Posterior vena cava (tissue), 2 donors: ENCODE measurements at regions of chr19 and their contacts with region 1.

Region 1: GRCh38 chr19:38290631-38291157 is 13.4 kb upstream of the C19orf33 start:
- DNase-seq: no peak

Region 2: DNA sequence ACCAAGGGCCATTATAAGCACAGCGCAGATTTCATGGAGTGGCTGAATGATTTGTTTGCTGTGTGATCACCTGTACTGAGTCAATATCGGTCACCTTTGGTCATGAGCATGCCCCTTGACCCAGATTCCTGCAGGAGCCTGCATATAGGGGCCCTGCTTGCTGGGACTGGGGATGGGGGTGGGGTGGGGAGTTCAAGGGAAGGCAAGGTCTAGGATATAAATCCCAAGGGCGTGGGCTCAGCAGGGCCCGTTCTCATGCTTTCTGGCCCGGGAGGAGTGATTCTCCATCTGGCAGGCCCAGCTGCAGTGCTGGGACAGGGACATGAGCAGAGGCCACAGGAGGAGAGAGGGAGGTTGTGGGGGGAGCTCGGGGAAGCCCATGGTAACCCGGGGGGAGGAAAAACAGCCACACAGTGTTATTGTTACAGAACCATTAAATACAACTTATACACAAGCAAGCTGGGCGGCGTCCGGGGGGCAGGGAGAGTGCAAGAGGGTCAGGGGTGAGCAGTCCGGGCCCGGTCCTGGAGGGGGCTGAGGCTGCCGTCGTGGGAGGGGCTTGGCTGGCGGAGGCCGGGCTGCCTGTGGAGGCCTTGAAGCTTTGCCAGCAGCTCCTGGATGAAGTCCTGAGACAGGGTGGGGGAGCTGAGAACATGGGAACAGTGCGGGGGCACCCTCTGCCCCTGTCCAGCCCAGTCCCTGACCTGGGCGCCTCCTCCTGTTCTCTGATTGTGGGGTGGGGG is 39.7 kb before region 1 on chr19:
- intact Hi-C with region 1: no loop called
- DNase-seq: peak; percentile 90

Region 3: DNA sequence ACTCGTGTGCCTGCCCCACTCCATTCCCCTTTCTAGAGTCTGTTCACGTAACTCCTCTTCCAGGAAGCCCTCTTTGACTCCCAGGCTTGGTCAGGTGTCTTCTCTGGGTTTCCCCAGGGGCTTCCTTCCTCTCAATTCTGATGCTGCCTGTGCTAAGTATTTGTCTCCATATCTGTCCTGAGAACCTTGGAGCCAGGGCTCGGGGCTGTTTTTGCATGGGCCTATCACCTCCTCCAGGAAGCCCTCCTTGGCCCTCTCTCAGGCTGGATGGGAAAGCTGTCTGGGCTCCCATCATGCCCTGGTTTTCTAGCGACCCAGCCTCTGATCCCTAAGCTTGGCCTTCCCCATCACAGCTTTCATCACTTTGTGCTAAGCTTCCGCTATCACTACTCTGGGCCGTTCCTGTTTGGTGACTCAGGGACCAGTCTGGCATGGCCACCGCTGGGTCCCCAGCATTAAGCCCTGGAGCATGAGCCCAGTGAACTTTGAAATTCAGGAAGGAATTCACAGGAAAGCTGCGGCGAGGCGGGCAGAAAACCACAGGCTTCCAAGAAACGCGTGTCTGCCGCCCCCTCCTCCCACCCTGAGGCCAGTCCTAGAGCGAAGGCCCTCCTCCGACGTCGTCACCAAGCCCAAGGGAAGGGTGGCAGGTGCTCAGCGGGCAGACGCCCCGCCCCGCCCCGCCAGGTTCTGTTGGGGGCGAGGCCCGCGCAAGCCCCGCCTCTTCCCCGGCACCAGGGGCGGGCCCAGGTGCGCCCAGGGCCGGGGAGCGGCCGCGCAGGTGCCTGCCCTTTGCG is 26.8 kb before region 1 on chr19:
- intact Hi-C with region 1: loop called in 1 of 2 experiments (anchors 1 kb)
- DNase-seq: peak; percentile 85

Region 4: DNA sequence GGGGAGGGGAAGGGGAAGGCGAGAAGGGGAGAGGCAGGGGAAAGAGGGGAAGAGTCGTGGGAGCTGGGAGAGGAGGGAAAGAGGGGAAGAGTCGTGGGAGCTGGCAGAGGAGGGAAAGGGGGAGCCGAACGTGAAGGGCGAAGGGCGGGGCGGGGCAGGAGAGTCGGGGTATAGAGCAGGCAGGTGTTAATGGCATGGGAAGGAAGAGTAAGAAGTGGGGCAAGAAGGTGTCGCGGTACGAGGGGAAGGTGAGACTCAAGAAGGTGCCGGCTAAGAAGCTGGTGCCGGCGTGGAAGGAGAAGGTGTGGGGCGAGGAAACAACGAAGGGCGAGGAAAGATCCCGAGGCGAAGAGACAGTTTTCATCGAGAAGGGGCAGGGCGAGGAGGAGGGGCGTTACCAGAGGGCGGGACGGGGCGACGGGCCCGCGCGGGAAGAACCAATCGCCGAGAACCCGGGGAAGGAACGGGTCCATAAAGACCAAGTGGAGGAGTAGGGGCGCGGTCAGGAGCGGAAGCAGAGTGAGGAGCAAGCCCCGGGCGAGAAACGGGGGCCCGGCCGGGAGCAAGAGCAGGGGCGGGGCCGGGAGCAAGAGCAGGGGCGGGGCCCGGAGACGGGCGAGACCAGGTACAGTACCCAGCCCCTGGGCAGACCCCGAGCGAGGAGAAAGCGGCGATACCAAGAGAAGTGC is 45.4 kb after region 1 on chr19:
- intact Hi-C with region 1: no loop called
- DNase-seq: peak; percentile 99